ENCODE measurements at regions of chr17 and their contacts with region 1.

Region 1: DNA sequence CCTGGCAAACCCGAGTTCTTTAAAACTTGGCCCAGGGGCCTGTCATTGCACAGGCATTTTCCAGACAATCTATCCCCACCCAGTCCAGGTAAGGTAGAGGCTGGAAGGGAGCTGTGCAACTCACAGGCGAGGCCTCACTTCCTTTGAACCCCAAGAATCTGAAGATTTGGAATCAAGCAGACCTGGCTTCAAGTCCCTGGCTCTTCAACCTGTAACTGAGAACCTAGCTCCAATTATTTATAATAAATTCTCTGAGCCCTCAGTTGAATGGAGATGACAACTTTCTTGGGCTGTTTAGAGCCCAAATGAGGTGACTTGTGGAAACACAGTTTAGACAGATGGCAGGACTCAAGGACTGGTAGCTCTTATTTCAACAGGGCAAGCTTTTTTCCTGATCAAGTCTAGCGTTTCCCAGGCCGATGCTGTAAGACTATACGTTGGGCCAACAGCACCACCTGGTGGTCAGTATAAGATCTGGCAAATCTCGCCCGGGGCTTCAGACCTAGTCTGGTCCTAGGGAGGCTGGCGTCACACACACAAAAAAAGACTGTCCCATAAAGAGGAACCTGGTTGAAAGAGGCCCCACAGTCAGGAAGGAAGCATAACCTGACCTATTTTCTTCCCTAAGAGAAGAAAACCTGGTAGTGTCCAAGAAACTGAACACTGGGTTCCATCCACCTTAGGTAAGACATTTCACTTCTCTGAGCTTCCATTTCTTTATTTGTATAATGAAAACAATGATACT is 117.9 kb downstream of the C17orf67 start:
- DNase-seq: peak; percentile 74
- H3K4me3 ChIP-seq: no peak overlapping the region
- H3K27ac ChIP-seq: no peak overlapping the region
- H3K4me1 ChIP-seq: no peaks in the 10 kb centered on the region
- H3K27me3 ChIP-seq: peaks cover 0 to 2% of the 10 kb centered on the region in 2 experiments
- CTCF ChIP-seq: peak; percentile 75 to 80
- POLR2A ChIP-seq: no peak

Region 2: DNA sequence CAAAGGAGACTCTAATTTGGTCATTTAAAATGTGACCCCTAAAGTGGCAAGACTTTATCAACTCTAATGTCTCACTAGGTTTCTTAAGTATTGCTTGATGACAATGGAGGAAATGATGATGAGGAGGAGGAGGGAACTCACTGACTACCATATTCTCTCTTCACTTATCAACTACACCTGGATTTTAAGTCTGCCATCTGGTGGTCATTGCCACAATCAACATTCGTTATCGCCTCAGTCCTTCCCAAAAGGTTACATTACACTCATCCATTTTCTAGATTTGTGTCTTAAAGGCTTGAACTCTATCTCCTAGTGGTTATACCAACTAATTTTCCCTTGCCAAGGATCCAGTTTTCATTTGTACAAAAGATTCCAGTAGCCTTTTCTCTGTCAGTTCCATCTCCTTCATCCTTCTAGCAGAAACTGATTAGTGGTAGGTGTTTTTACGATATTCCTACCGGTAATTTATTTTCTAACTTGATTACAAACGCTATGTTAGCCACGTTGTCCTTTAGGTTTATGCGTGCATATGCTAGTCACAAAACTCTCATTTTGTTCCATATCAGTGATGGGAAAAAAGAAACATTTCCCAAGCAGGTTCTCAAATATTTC is 236.8 kb before region 1 on chr17:
- CTCF ChIA-PET with region 1: interaction called, 9 read pairs
- POLR2A ChIA-PET with region 1: no interaction called
- dilution Hi-C with region 1: no loop called
- intact Hi-C with region 1: loop called (anchors 1 kb)
- DNase-seq: peak; percentile 44
- H3K4me3 ChIP-seq: no peak overlapping the region
- H3K27ac ChIP-seq: no peak overlapping the region
- H3K4me1 ChIP-seq: no peaks in the 10 kb centered on the region
- H3K27me3 ChIP-seq: peaks cover 0 to 7% of the 10 kb centered on the region in 2 experiments
- CTCF ChIP-seq: peak; percentile 30 to 52
- POLR2A ChIP-seq: no peak

Region 3: DNA sequence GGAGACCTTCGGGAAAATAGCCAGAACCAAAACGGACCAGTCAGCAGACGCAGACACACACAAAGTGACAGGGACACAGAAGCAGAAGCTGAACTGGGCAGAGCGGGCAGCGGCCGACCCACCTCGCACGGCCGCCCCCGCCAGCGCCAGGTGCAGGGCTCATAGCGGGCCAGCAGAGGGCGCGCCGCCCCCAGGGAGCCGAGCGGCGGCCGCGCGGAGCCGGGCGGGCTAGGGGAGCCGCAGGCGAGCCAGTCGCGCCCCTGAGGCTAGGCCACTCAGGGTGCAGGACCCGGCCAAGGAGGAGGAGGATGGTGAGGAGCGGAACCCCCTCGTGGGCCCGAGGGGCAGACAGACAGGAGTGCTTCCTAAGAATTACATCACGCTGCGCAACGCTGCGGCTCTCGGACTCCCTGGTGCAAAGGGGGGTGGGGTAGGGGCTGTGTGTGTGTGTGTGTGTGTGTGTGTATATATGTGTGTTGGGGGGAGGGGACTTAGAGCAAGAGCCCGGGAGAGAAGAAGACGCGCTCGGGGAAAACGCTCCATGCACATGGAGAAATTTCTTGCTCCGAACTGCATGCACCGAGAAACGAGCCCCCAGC is 123.2 kb before region 1 on chr17:
- CTCF ChIA-PET with region 1: interaction called, 473 read pairs
- POLR2A ChIA-PET with region 1: interaction called, 4 read pairs
- dilution Hi-C with region 1: loop called (anchors 25 kb)
- intact Hi-C with region 1: loop called (anchors 1 kb)
- DNase-seq: peak; percentile 45
- H3K4me3 ChIP-seq: peak overlapping the region; percentile 46 to 66 (median 48)
- H3K27ac ChIP-seq: no peak overlapping the region
- H3K4me1 ChIP-seq: peaks cover 21% of the 10 kb centered on the region
- H3K27me3 ChIP-seq: peaks cover 41 to 54% of the 10 kb centered on the region in 2 experiments
- CTCF ChIP-seq: peak; percentile 77 to 88
- POLR2A ChIP-seq: no peak

Region 4: GRCh38 chr17:56638591-56639051 is 77.2 kb before region 1 on chr17:
- CTCF ChIA-PET with region 1: interaction called, 14 read pairs
- POLR2A ChIA-PET with region 1: no interaction called
- dilution Hi-C with region 1: no loop called
- intact Hi-C with region 1: no loop called
- DNase-seq: no peak
- H3K4me3 ChIP-seq: no peak overlapping the region
- H3K27ac ChIP-seq: no peak overlapping the region
- H3K4me1 ChIP-seq: no peaks in the 10 kb centered on the region
- H3K27me3 ChIP-seq: no peaks in the 10 kb centered on the region
- CTCF ChIP-seq: no peak
- POLR2A ChIP-seq: no peak

Region 5: GRCh38 chr17:56699186-56699895 is 16.4 kb before region 1 on chr17:
- CTCF ChIA-PET with region 1: interaction called, 54 read pairs
- POLR2A ChIA-PET with region 1: interaction called, 4 read pairs
- dilution Hi-C with region 1: no loop called
- intact Hi-C with region 1: no loop called
- DNase-seq: peak; percentile 56
- H3K4me3 ChIP-seq: no peak overlapping the region
- H3K27ac ChIP-seq: peak overlapping the region; percentile 88
- H3K4me1 ChIP-seq: peaks cover 18% of the 10 kb centered on the region
- H3K27me3 ChIP-seq: no peaks in the 10 kb centered on the region
- CTCF ChIP-seq: no peak
- POLR2A ChIP-seq: peak; percentile 42

Region 6: DNA sequence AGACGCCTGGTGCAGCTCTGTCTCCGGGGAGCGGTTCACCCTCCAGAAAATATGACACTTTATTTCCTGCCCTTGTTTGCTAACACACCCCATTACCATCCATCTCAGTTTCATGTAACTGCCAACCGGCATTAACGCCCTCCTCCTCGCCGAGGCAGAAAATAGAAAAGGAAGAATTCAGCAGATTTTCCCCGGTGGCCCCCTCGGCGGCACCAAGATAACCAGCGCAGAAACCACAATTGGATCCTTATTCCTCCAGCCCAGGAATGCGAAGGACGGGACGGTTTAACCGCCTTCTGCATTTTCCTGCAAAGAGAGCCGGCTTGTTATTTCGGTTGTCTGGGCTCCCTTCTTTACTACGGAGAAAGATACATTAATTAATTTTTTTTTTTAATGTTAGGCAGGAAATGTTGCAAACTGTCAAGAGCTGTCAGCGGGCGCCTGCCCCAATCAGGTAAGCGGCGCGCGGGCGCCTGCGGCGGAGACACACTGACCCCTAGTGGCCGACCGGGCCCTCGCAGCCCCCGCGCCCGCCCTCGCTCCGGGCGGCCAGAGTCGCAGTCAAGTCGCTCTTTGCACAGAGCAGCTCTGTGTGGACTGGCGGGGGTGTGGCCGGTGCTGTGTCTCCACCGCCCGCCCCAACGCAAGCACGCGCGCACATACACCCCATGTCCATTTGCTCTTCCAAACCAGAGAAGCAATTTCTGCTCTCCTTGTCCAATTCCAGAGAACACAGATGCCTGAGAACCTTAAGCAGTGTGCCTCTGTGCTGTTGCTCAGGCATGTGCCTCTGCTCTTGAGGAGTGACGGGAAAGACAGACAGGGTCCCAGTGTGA is 64.3 kb after region 1 on chr17:
- CTCF ChIA-PET with region 1: interaction called, 141 read pairs
- POLR2A ChIA-PET with region 1: no interaction called
- dilution Hi-C with region 1: no loop called
- intact Hi-C with region 1: loop called (anchors 1 kb)
- DNase-seq: peak; percentile 79
- H3K4me3 ChIP-seq: peak overlapping the region in 2 of 3 experiments; percentile 23 to 54
- H3K27ac ChIP-seq: no peak overlapping the region
- H3K4me1 ChIP-seq: peaks cover 11% of the 10 kb centered on the region
- H3K27me3 ChIP-seq: peaks cover 0 to 5% of the 10 kb centered on the region in 2 experiments
- CTCF ChIP-seq: peak; percentile 96 to 99
- POLR2A ChIP-seq: no peak

Region 7: GRCh38 chr17:57009737-57010445 is 294.1 kb after region 1 on chr17:
- CTCF ChIA-PET with region 1: interaction called, 11 read pairs
- POLR2A ChIA-PET with region 1: no interaction called
- dilution Hi-C with region 1: no loop called
- intact Hi-C with region 1: no loop called
- DNase-seq: peak; percentile 73
- H3K4me3 ChIP-seq: no peak overlapping the region
- H3K27ac ChIP-seq: no peak overlapping the region
- H3K4me1 ChIP-seq: peaks cover 4% of the 10 kb centered on the region
- H3K27me3 ChIP-seq: peaks cover 3 to 6% of the 10 kb centered on the region in 2 experiments
- CTCF ChIP-seq: peak; percentile 66 to 73
- POLR2A ChIP-seq: no peak